Dorsolateral prefrontal cortex (tissue), 120 donors: ENCODE measurements at regions of chr12 and their contacts with region 1.

Region 1: DNA sequence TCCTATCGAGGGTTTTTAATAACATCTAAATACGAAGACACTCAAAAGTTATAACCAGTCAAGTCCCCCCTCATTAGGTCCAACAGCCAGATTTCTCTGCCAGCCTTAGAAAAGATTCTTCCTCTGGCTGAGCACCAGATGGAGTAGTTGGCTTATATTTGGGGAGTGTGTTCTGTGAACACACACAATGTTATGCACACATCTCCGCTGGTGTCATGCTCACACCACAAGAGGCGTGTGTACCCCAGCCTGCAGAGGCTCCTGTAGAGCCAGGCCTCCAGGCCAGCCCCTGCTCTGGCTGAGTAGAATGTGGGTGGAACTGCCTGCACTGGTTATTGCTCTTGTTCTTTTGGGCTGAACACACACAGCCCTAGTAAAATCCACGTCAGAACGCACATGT is 64.0 kb downstream of the PIWIL1 start:
- DNase-seq: no peak
- H3K4me3 ChIP-seq: no peak overlapping the region
- H3K27ac ChIP-seq: no peak overlapping the region
- H3K27me3 ChIP-seq: peaks cover 0 to 11% (median 0%) of the 10 kb centered on the region in 45 donors
- CTCF ChIP-seq: peak in 50 of 56 donors; percentile 13 to 68 (median 40)

Region 2: GRCh38 chr12:130747867-130748740 is 346.4 kb after region 1 on chr12:
- intact Hi-C with region 1: loop called in 1 of 2 experiments (anchors 2 kb)
- DNase-seq: peak; percentile 62 to 86 (median 81)
- H3K4me3 ChIP-seq: no peak overlapping the region
- H3K27ac ChIP-seq: peak overlapping the region in 2 of 59 donors; percentile 1 to 26
- H3K27me3 ChIP-seq: peaks cover 0 to 18% (median 0%) of the 10 kb centered on the region in 45 donors
- CTCF ChIP-seq: peak; percentile 71 to 94 (median 84)